Common myeloid progenitor, CD34-positive (primary cell): ENCODE measurements at regions of chr1 and their contacts with region 1.

Region 1: GRCh38 chr1:195897076-195897475 is 711.2 kb downstream of the KCNT2 start:
- DNase-seq: peak; percentile 18 to 33 (median 28)
- H3K4me3 ChIP-seq: no peak overlapping the region
- H3K27ac ChIP-seq: no peak overlapping the region
- H3K4me1 ChIP-seq: peaks cover 10 to 25% (median 16%) of the 10 kb centered on the region in 4 experiments
- H3K27me3 ChIP-seq: no peaks in the 10 kb centered on the region

Region 2: GRCh38 chr1:195872376-195872775 is 24.7 kb before region 1 on chr1:
- CTCF ChIA-PET with region 1: no interaction called
- POLR2A ChIA-PET with region 1: no interaction called
- DNase-seq: peak in 2 of 3 donors; percentile 51 to 61
- H3K4me3 ChIP-seq: no peak overlapping the region
- H3K27ac ChIP-seq: no peak overlapping the region
- H3K4me1 ChIP-seq: no peaks in the 10 kb centered on the region
- H3K27me3 ChIP-seq: no peaks in the 10 kb centered on the region

Region 3: DNA sequence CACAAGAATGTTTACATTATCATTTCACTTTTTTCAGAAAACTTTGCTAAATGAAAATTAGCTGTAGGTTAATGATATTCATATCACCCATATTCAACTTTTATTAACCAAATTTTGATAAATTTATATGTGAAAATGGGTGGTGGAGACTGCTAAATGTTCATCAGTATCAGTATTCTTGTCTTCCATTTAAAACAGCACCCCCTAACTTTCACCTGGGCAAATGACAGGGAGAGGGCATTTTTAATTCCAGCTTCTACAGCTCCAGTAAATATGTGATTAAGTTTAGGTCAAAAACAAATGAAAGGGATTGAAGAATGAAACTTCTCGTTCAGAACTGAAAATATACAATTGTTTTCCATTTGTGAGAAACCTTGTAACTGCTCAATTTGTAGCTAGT is 11.1 kb before region 1 on chr1:
- CTCF ChIA-PET with region 1: interaction called, 12 read pairs
- POLR2A ChIA-PET with region 1: no interaction called
- DNase-seq: no peak
- H3K4me3 ChIP-seq: no peak overlapping the region
- H3K27ac ChIP-seq: no peak overlapping the region
- H3K4me1 ChIP-seq: no peaks in the 10 kb centered on the region
- H3K27me3 ChIP-seq: no peaks in the 10 kb centered on the region